HCT116 (cell line): ENCODE measurements at regions of chr5 and their contacts with region 1.

Region 1: GRCh38 chr5:120457839-120458507 is 6.1 kb upstream of the PRR16 start:
- DNase-seq: peak; percentile 59
- ATAC-seq: peak; percentile 96
- H3K4me3 ChIP-seq: peak overlapping the region; percentile 48 to 63
- H3K27ac ChIP-seq: no peak overlapping the region
- H3K4me1 ChIP-seq: 0 out of 4 replicates have a peak, but pooled peaks cover 0 to 4% of the 10 kb centered on the region in 2 experiments
- H3K27me3 ChIP-seq: no peaks in the 10 kb centered on the region
- CTCF ChIP-seq: peak; percentile 52 to 72 (median 66); a peak in 5 of 6 replicates
- POLR2A ChIP-seq: no peak
- RAD21 ChIP-seq: peak; percentile 84

Region 2: GRCh38 chr5:119943148-119943547 is 514.8 kb before region 1 on chr5:
- CTCF ChIA-PET with region 1: no interaction called
- POLR2A ChIA-PET with region 1: no interaction called
- RAD21 ChIA-PET with region 1: no interaction called
- intact Hi-C with region 1: loop called (anchors 5 kb)
- DNase-seq: no peak
- ATAC-seq: peak; percentile 55; the same call in 1 of the 2 replicates
- H3K4me3 ChIP-seq: no peak overlapping the region
- H3K27ac ChIP-seq: no peak overlapping the region
- H3K4me1 ChIP-seq: no peaks in the 10 kb centered on the region
- H3K27me3 ChIP-seq: no peaks in the 10 kb centered on the region
- CTCF ChIP-seq: peak in 1 of 3 experiments; percentile 37; a peak in 1 of 6 replicates
- POLR2A ChIP-seq: no peak
- RAD21 ChIP-seq: peak; percentile 58